ENCODE measurements at regions of chr17 and their contacts with region 1.

Region 1: GRCh38 chr17:47895856-47896671 is at the start of gene SP2:
- DNase-seq: peak; percentile 99 to 100 (median 100)
- ATAC-seq: peak; percentile 96
- H3K4me3 ChIP-seq: peak within 1 kb of the TSS; percentile 83
- H3K27ac ChIP-seq: peak within 1 kb of the TSS; percentile 90
- H3K4me1 ChIP-seq: peaks cover 3 to 17% of the 10 kb centered on the region in 2 experiments; a peak in 3 of 5 replicates
- H3K27me3 ChIP-seq: no peaks in the 10 kb centered on the region
- CTCF ChIP-seq: no peak; a peak in 1 of 6 replicates
- EP300 ChIP-seq: no peak
- POLR2A ChIP-seq: peak; percentile 69; the same call in 1 of the 2 replicates
- RAD21 ChIP-seq: no peak; a peak in 1 of 4 replicates
- polyA plus RNA-seq, gene SP2: 0.77 to 0.88 TPM

Region 2: DNA sequence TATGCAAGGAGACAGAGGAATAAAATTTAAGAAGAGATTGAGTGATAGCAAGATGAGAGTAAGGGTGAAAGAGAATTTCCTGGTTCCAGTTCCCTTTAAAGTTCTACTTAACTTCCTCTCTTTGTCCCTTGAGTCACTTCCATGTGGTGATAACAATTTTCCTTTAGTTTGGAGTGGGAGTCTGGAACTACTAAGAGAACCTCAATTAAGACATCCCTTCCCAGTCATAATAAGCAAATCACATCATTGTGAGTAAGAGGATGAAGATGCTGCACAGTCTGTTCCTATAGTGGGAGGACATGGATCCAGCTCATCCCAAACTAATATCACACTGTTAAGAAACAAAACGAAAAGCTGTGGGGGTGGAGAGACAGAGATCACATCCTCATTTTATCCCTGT is 138.7 kb before region 1 on chr17:
- CTCF ChIA-PET with region 1: no interaction called
- POLR2A ChIA-PET with region 1: no interaction called
- in situ Hi-C with region 1: no loop called
- intact Hi-C with region 1: no loop called
- DNase-seq: no peak
- ATAC-seq: no peak
- H3K4me3 ChIP-seq: no peak overlapping the region
- H3K27ac ChIP-seq: no peak overlapping the region
- H3K4me1 ChIP-seq: no peaks in the 10 kb centered on the region
- H3K27me3 ChIP-seq: peaks cover 8% of the 10 kb centered on the region in 2 experiments; a peak in 2 of 5 replicates
- CTCF ChIP-seq: no peak
- EP300 ChIP-seq: no peak
- POLR2A ChIP-seq: no peak
- RAD21 ChIP-seq: no peak

Region 3: DNA sequence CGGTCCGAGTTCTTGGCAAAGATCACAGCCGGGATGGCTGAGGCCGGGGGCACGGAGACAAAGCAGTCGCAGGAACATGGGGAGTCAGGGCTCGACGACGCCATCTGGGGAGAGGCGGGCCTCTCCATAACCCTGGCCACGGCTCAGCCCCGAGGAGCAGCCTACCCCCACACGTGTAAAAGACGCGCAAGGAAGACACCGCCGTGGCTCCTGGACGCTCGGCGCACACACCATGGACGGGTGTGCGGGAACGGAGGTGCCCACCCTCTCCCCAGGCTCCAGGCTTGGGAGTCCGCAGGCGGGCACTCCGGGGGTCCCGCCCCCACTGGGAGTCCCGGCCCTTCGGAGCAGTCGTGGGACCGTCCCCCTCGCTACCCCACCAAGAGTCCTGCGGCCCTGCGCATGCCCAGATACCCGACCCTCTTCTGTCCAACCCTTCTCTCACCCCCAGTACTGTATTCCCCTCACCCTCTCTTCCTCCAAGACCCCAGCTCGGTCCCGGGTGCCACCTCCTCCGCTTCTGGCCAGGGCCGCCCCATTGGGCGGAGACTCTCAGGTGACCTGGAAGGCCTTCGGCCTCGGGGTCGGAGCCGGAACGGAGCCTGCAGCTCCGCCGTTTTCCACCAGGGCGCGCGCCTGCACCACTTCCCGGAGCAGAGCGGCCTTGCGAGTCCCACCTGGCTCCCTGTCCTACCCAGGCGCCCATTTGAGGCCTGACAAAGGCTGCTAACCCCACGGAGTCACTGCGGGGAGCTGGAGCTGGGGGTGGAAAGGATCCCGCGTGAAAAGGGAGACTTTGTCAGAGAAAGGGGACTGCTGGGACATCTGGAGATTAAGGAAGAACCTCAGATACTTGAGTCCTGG is 55.1 kb before region 1 on chr17 and contains the start of gene SCRN2:
- CTCF ChIA-PET with region 1: interaction called, 171 read pairs
- POLR2A ChIA-PET with region 1: interaction called, 18 read pairs
- in situ Hi-C with region 1: loop called (anchors 5 kb)
- intact Hi-C with region 1: no loop called
- DNase-seq: peak; percentile 90 to 95 (median 92)
- ATAC-seq: peak; percentile 94
- H3K4me3 ChIP-seq: peak within 1 kb of the TSS; percentile 91
- H3K27ac ChIP-seq: peak within 1 kb of the TSS; percentile 75
- H3K4me1 ChIP-seq: peaks cover 33 to 52% of the 10 kb centered on the region in 2 experiments
- H3K27me3 ChIP-seq: no peaks in the 10 kb centered on the region
- CTCF ChIP-seq: peak; percentile 96 to 98 (median 97)
- EP300 ChIP-seq: no peak
- POLR2A ChIP-seq: peak; percentile 75
- RAD21 ChIP-seq: peak; percentile 99
- polyA plus RNA-seq, gene SCRN2: 0.25 to 1.2 TPM

Region 4: GRCh38 chr17:47870056-47870455 is 26.0 kb before region 1 on chr17:
- CTCF ChIA-PET with region 1: no interaction called
- POLR2A ChIA-PET with region 1: interaction called, 11 read pairs
- in situ Hi-C with region 1: no loop called
- intact Hi-C with region 1: no loop called
- DNase-seq: peak in 2 of 4 experiments; percentile 51 to 57
- ATAC-seq: no peak
- H3K4me3 ChIP-seq: no peak overlapping the region
- H3K27ac ChIP-seq: no peak overlapping the region
- H3K4me1 ChIP-seq: peaks cover 56 to 68% of the 10 kb centered on the region in 2 experiments
- H3K27me3 ChIP-seq: no peaks in the 10 kb centered on the region
- CTCF ChIP-seq: no peak
- EP300 ChIP-seq: no peak
- POLR2A ChIP-seq: no peak
- RAD21 ChIP-seq: no peak

Region 5: DNA sequence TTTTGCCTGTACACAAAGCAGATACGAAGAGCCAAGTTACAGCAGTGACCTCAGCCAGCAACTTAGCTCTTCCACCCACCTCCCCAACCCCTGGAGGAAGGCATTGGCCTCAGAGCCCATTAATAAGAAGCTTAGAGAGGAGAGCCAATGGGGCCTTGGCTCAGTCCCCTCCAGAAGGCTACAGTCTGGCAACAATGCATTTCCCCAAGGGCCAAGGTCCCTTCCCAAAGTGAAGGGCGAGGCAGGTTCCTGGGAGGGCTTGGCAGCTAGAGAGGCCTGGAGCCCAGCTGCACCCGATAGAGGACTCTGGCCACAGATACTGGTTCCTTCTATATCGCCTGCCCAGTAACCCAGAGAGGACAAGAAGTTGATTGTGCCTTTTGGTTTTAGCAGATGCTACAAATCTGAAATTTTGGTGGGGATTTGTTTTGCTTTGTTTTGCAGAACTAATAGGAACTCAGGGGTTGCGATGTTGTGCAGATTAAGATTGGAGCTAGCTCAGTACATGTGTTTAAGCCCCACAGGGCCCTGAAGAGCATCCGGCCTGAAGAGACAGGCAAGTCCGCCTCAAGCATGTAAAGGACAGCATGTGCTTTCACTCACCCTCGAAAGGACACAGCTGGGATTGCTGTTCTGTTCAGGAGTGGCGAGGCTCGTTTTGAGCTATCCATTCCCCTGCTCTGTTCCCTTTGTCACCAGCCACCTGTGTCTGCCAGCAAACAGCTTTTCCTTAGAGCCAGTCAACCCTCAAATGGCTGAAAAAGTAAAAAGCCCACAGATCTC is 33.3 kb after region 1 on chr17:
- CTCF ChIA-PET with region 1: no interaction called
- POLR2A ChIA-PET with region 1: interaction called, 11 read pairs
- in situ Hi-C with region 1: no loop called
- intact Hi-C with region 1: no loop called
- DNase-seq: no peak
- ATAC-seq: no peak
- H3K4me3 ChIP-seq: no peak overlapping the region
- H3K27ac ChIP-seq: no peak overlapping the region
- H3K4me1 ChIP-seq: peaks cover 24 to 45% of the 10 kb centered on the region in 2 experiments
- H3K27me3 ChIP-seq: no peaks in the 10 kb centered on the region
- CTCF ChIP-seq: no peak
- EP300 ChIP-seq: no peak
- POLR2A ChIP-seq: no peak
- RAD21 ChIP-seq: no peak

Region 6: GRCh38 chr17:47970704-47971463 is 74.8 kb after region 1 on chr17 and contains the start of gene CDK5RAP3:
- CTCF ChIA-PET with region 1: interaction called, 3 read pairs
- POLR2A ChIA-PET with region 1: interaction called, 18 read pairs
- in situ Hi-C with region 1: no loop called
- intact Hi-C with region 1: loop called (anchors 1 kb)
- DNase-seq: peak; percentile 97 to 100 (median 98)
- ATAC-seq: peak; percentile 99
- H3K4me3 ChIP-seq: peak within 1 kb of the TSS; percentile 54
- H3K27ac ChIP-seq: peak within 1 kb of the TSS; percentile 84
- H3K4me1 ChIP-seq: peaks cover 20 to 31% of the 10 kb centered on the region in 2 experiments; a peak in 4 of 5 replicates
- H3K27me3 ChIP-seq: no peaks in the 10 kb centered on the region
- CTCF ChIP-seq: peak; percentile 98 to 99 (median 98)
- EP300 ChIP-seq: no peak
- POLR2A ChIP-seq: peak; percentile 93
- RAD21 ChIP-seq: peak; percentile 73 to 76
- polyA plus RNA-seq, gene CDK5RAP3: 44.2 to 73.0 TPM

Region 7: GRCh38 chr17:48215583-48216139 is 319.6 kb after region 1 on chr17:
- CTCF ChIA-PET with region 1: no interaction called
- POLR2A ChIA-PET with region 1: no interaction called
- in situ Hi-C with region 1: no loop called
- intact Hi-C with region 1: no loop called
- DNase-seq: peak; percentile 58 to 71 (median 65)
- ATAC-seq: peak; percentile 90
- H3K4me3 ChIP-seq: no peak overlapping the region
- H3K27ac ChIP-seq: no peak overlapping the region
- H3K4me1 ChIP-seq: peaks cover 5 to 21% of the 10 kb centered on the region in 2 experiments
- H3K27me3 ChIP-seq: no peaks in the 10 kb centered on the region
- CTCF ChIP-seq: peak; percentile 76 to 89 (median 82)
- EP300 ChIP-seq: no peak
- POLR2A ChIP-seq: no peak
- RAD21 ChIP-seq: peak; percentile 89 to 94

Measured in K562 (cell line).